Gastrocnemius medialis (tissue), 4 donors: ENCODE measurements at regions of chr9 and their contacts with region 1.

Region 1: GRCh38 chr9:4339357-4339756 is 39.5 kb upstream of the GLIS3 start:
- DNase-seq: peak; percentile 43 to 68
- ATAC-seq: peak; percentile 74 to 86
- H3K4me3 ChIP-seq: no peak overlapping the region
- H3K27ac ChIP-seq: no peak overlapping the region
- H3K4me1 ChIP-seq: peaks cover 3 to 6% of the 10 kb centered on the region in 2 donors
- H3K27me3 ChIP-seq: no peaks in the 10 kb centered on the region
- CTCF ChIP-seq: peak; percentile 72 to 91 (median 88)
- POLR2A ChIP-seq: no peak

Region 2: GRCh38 chr9:3467593-3468219 is 871.7 kb before region 1 on chr9:
- in situ Hi-C with region 1: loop called in 1 of 4 experiments (anchors 25 kb)
- intact Hi-C with region 1: no loop called
- DNase-seq: peak; percentile 49 to 61
- ATAC-seq: peak; percentile 95 to 98
- H3K4me3 ChIP-seq: no peak overlapping the region
- H3K27ac ChIP-seq: peak overlapping the region in 1 of 4 donors; percentile 2
- H3K4me1 ChIP-seq: peaks cover 17 to 18% of the 10 kb centered on the region in 2 donors
- H3K27me3 ChIP-seq: no peaks in the 10 kb centered on the region
- CTCF ChIP-seq: peak; percentile 45 to 89 (median 72)
- POLR2A ChIP-seq: no peak

Region 3: GRCh38 chr9:3732077-3733038 is 607.0 kb before region 1 on chr9:
- in situ Hi-C with region 1: loop called in 3 of 4 experiments (anchors 10 to 25 kb)
- intact Hi-C with region 1: loop called (anchors 1 kb)
- DNase-seq: peak in 1 of 2 donors; percentile 6
- ATAC-seq: peak; percentile 82 to 99
- H3K4me3 ChIP-seq: peak overlapping the region in 2 of 4 donors; percentile 8 to 32
- H3K27ac ChIP-seq: no peak overlapping the region
- H3K4me1 ChIP-seq: no peaks in the 10 kb centered on the region
- H3K27me3 ChIP-seq: no peaks in the 10 kb centered on the region
- CTCF ChIP-seq: peak; percentile 20 to 60 (median 51)
- POLR2A ChIP-seq: no peak

Region 4: DNA sequence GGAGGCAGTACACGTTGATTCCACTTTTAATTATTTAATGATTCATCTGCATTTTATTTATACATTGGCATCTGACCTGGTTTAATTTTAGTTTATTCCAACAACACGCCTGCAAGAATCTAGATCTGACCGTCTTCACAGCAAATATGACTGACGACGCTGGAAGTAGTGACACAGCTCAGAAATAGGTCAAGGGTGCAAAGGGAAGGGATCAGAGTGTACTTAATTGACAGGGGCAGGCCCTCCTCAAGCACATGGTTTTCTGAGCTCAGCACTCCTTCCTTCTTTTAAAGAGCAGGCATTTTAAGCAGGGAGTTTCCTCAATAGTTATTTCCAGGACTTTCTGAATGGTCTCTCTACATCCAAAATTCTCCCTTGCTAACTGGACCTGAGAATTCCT is 164.6 kb before region 1 on chr9:
- in situ Hi-C with region 1: no loop called
- intact Hi-C with region 1: no loop called
- DNase-seq: no peak
- ATAC-seq: peak in 1 of 2 donors; percentile 65
- H3K4me3 ChIP-seq: no peak overlapping the region
- H3K27ac ChIP-seq: peak overlapping the region in 1 of 4 donors; percentile 54
- H3K4me1 ChIP-seq: peaks cover 0 to 14% of the 10 kb centered on the region in 2 donors
- H3K27me3 ChIP-seq: no peaks in the 10 kb centered on the region
- CTCF ChIP-seq: no peak
- POLR2A ChIP-seq: no peak

Region 5: DNA sequence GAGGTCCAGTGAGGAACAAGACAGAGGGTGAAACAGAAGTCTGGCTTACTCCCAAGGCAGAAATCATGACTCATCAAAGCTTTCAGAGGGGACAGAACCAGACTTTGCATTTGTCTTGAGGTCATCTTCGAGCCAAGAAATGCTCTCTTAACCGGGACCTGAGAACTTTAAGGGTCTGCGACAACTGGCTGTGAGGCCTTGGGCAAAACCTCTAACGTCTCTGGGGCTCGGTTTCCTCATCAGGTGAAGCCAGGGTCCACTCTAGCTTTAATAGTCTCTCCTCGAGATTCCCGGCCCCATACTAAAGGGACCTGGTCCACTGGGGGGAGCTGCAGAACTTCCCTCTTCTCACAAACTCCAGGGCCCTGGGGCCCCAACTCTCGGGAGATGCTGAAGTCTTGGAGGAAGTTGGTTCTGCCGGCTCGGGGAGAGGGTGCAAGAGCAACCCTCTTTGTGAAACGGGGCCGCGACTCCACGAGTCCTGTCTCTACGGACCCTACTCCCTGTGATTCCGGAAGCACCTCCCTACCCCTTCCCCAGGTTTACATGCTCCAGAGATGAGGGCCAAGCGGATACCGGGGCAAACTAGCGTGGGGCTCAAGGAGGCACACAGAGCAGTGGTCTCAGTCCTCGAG is 42.1 kb before region 1 on chr9:
- in situ Hi-C with region 1: no loop called
- intact Hi-C with region 1: loop called (anchors 5 kb)
- DNase-seq: peak; percentile 68 to 70
- ATAC-seq: peak; percentile 59 to 69
- H3K4me3 ChIP-seq: peak overlapping the region; percentile 67 to 87 (median 76)
- H3K27ac ChIP-seq: peak overlapping the region; percentile 80 to 87 (median 84)
- H3K4me1 ChIP-seq: peaks cover 14 to 20% of the 10 kb centered on the region in 2 donors
- H3K27me3 ChIP-seq: no peaks in the 10 kb centered on the region
- CTCF ChIP-seq: peak in 3 of 5 experiments; percentile 32 to 52 (median 47)
- POLR2A ChIP-seq: no peak

Region 6: DNA sequence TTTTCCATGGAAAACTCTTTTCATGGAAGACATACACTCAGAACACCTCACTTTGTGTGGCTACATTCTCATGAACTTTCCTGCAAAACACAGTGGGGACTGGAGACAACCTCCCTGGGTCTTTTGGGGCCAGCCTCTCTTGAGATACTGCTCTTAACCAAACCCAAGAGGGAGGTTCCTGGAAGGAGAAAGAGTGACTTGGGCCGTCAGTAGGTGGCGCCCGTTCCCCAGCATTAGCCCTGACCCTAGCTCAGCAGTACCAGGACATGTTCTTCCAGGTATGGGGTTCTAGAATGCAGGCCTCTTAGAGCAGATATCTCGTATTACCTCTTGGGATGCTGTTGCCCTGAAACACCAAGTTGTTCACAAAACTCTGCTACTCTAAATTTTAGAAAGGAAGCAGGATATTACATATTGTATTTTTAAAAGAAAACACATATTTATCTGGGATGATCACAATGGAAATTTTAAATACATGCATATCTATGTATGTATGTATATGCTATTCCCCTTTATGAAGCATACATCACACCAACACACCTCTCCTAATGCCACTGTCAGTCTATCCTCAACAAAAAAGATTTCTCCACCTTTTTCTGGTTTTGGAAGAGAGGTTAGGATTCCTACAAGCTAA is 23.7 kb before region 1 on chr9:
- in situ Hi-C with region 1: no loop called
- intact Hi-C with region 1: loop called (anchors 1 kb)
- DNase-seq: peak; percentile 41 to 42
- ATAC-seq: peak; percentile 74 to 81
- H3K4me3 ChIP-seq: no peak overlapping the region
- H3K27ac ChIP-seq: no peak overlapping the region
- H3K4me1 ChIP-seq: no peaks in the 10 kb centered on the region
- H3K27me3 ChIP-seq: no peaks in the 10 kb centered on the region
- CTCF ChIP-seq: peak in 4 of 5 experiments; percentile 57 to 84 (median 74)
- POLR2A ChIP-seq: no peak